Calu3 (cell line): ENCODE measurements at regions of chr2 and their contacts with region 1.

Region 1: DNA sequence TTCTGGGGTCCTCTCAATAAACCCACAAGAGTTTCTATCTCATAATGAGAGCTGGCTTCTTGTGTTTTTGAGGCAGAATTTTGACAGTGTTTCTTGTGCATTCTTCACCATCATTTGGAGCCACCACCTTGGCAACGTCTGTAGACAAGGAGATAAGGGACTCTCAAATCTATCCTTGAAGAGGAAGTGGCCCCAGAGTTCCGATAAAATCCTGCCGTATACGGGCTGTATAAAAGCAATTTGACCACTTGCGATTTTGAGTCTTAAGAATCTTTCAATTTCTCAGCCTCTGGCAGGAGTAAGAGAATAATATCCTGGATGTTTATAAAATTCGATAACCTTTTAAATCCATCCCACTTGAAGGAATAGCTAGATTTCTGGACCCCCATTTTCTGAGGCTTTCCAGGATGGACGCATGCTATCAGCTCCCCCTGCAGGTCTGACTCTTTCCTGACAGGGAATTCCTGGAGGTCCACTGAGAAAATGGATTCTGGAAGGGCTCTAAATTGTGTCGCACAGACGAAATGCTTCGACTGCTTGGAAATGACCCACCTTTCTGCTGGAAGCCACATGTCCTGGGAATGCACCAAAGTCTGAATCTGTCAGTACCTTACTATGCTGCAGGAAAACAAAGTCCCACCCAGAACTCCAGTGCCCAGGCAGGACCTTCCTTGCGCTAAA is 54.1 kb downstream of the E2F6 start:
- DNase-seq: peak; percentile 70
- H3K4me3 Mint-ChIP-seq: peak overlapping the region; percentile 50
- H3K27ac Mint-ChIP-seq: no peak overlapping the region
- H3K4me1 Mint-ChIP-seq: peaks cover 12% of the 10 kb centered on the region
- H3K27me3 Mint-ChIP-seq: peaks cover 19% of the 10 kb centered on the region
- CTCF ChIP-seq: peak; percentile 85

Region 2: GRCh38 chr2:11129598-11130449 is 282.1 kb before region 1 on chr2:
- CTCF ChIA-PET with region 1: interaction called, 33 read pairs
- intact Hi-C with region 1: loop called (anchors 1 kb)
- DNase-seq: peak; percentile 84
- H3K4me3 Mint-ChIP-seq: peak overlapping the region; percentile 21
- H3K27ac Mint-ChIP-seq: no peak overlapping the region
- H3K4me1 Mint-ChIP-seq: peaks cover 14% of the 10 kb centered on the region
- H3K27me3 Mint-ChIP-seq: peaks cover 35% of the 10 kb centered on the region
- CTCF ChIP-seq: no peak

Region 3: GRCh38 chr2:11234309-11234708 is 177.6 kb before region 1 on chr2:
- CTCF ChIA-PET with region 1: interaction called, 16 read pairs
- intact Hi-C with region 1: loop called (anchors 1 kb)
- DNase-seq: no peak
- H3K4me3 Mint-ChIP-seq: no peak overlapping the region
- H3K27ac Mint-ChIP-seq: no peak overlapping the region
- H3K4me1 Mint-ChIP-seq: no peaks in the 10 kb centered on the region
- H3K27me3 Mint-ChIP-seq: no peaks in the 10 kb centered on the region
- CTCF ChIP-seq: no peak

Region 4: DNA sequence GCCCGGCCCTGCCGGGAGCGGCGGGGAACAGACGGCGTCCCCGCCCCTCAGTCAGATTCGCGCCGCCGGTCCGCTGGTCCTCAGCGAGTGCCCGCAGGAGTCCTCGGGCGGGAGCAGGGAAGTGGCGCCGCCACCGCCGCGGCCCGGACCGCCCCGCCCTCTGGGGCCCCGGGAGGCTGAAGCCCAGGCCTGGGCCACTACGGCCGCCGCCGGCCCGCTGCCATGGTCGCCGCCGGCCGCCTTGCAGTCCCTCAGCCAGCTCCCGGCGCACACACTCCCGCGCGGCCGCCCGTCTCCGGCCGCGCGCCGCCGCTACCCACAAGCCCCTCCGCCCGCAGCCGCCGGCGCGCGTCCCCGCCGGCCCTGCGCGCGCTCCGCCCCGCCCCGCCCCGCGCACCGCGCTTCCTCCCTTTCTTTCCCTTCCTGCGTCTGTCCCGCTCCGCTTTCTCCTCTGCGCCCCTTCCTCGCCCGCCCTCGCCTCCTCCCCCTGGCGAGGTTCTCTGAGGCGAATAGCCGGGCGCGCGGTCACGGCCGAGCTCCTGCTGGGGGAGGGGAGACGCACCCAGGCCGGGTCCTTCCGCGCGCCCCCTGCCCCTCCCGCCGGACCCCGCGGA is 67.5 kb before region 1 on chr2 and contains the start of gene ROCK2:
- CTCF ChIA-PET with region 1: interaction called, 6 read pairs
- intact Hi-C with region 1: loop called (anchors 10 kb)
- DNase-seq: peak; percentile 87
- H3K4me3 Mint-ChIP-seq: peak within 1 kb of the TSS; percentile 82
- H3K27ac Mint-ChIP-seq: peak within 1 kb of the TSS; percentile 67
- H3K4me1 Mint-ChIP-seq: peaks cover 10% of the 10 kb centered on the region
- H3K27me3 Mint-ChIP-seq: peaks cover 15% of the 10 kb centered on the region
- CTCF ChIP-seq: no peak
- total RNA-seq, gene ROCK2: 30.8 and 35.3 TPM in 2 replicates

Region 5: GRCh38 chr2:11553661-11554398 is 141.9 kb after region 1 on chr2:
- CTCF ChIA-PET with region 1: no interaction called
- intact Hi-C with region 1: no loop called
- DNase-seq: no peak
- H3K4me3 Mint-ChIP-seq: no peak overlapping the region
- H3K27ac Mint-ChIP-seq: no peak overlapping the region
- H3K4me1 Mint-ChIP-seq: peaks cover 9% of the 10 kb centered on the region
- H3K27me3 Mint-ChIP-seq: peaks cover 88% of the 10 kb centered on the region
- CTCF ChIP-seq: no peak